ENCODE measurements at regions of chr10 and their contacts with region 1.

Region 1: GRCh38 chr10:69318106-69318866 is 40.0 kb downstream of the HK1 start:
- DNase-seq: peak; percentile 98
- H3K4me3 Mint-ChIP-seq: peak overlapping the region; percentile 98
- H3K27ac Mint-ChIP-seq: peak overlapping the region; percentile 98
- H3K4me1 Mint-ChIP-seq: peaks cover 30% of the 10 kb centered on the region
- H3K27me3 Mint-ChIP-seq: no peaks in the 10 kb centered on the region

Region 2: DNA sequence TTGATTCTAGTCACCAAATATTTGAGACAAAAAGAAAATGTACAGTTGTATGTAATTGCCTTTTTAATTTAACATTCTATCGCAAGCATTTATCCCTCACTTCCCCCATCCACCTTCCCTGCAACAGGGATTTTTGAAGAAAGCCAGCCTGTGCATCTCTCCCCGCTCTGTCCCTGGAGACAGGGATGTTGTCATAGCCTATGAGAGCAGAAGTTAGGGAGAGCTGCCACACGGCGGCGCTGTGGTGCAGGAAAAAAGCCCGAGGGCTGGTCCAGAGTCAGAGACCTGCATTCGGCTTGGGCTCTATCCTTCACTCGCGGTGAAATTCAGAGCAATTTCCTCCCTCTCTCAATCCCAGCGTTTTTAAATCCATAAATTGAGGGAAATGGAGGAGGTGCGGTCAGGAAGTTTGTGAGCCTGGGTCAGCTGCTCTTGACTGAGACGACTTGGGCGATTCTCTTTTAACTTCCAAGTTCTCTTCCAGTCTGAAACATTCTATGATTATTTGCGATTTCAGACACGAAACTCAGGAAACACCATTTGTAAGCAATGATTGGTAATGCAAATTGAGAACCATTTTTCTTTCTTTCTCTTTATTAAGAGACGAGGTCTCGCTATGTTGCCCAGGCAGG is 80.6 kb before region 1 on chr10:
- intact Hi-C with region 1: loop called (anchors 1 kb)
- DNase-seq: peak; percentile 96
- H3K4me3 Mint-ChIP-seq: no peak overlapping the region
- H3K27ac Mint-ChIP-seq: no peak overlapping the region
- H3K4me1 Mint-ChIP-seq: peaks cover 20% of the 10 kb centered on the region
- H3K27me3 Mint-ChIP-seq: no peaks in the 10 kb centered on the region

Region 3: GRCh38 chr10:69335063-69335587 is 16.8 kb after region 1 on chr10:
- intact Hi-C with region 1: loop called (anchors 2 kb)
- DNase-seq: peak; percentile 75
- H3K4me3 Mint-ChIP-seq: peak overlapping the region; percentile 78
- H3K27ac Mint-ChIP-seq: peak overlapping the region; percentile 91
- H3K4me1 Mint-ChIP-seq: peaks cover 46% of the 10 kb centered on the region
- H3K27me3 Mint-ChIP-seq: no peaks in the 10 kb centered on the region

Region 4: GRCh38 chr10:69359594-69359993 is 41.3 kb after region 1 on chr10:
- intact Hi-C with region 1: loop called (anchors 2 kb)
- DNase-seq: peak; percentile 75
- H3K4me3 Mint-ChIP-seq: peak overlapping the region; percentile 25
- H3K27ac Mint-ChIP-seq: peak overlapping the region; percentile 70
- H3K4me1 Mint-ChIP-seq: peaks cover 44% of the 10 kb centered on the region
- H3K27me3 Mint-ChIP-seq: no peaks in the 10 kb centered on the region

Region 5: DNA sequence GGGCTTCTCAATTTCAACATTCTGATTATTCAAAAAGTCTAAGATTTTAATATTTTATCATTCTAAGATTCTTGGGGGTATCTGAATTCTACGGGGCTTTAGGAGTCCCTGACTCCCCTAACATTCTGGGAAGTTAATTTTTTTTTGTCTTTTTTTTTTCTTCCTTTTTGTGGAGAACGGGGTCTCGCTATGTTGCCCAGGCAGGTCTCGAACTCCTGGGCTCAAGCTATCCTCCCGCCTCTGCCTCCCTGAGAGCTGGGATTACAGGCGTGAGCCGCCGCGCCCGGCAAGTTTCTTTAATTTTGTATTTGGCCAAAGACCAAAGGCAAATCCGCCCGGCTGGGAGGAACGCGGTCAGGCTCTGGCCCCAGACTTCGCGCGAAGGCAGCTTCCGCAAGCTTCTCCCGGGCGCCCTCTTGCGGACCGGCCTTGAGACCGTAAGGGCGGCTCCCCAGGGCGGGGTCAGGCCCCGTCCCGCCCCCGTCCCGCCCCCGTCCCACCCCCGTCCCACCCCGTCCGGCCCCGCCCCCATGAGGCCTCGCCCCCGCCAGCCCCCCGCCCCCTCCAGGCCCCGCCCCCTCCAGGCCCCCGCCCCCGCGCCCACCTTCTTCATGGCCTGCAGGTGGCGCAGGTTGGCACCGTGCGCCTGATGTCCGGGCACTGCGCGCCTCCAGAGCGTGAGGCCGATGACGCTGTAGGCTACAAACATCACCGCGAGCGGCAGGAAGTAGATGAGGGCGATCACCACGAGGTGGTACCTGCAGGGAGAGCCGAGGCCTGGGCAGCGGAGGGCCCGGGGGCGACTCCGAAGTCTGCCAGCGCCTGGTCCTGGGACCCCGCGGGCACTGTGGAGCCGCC is 90.3 kb after region 1 on chr10:
- intact Hi-C with region 1: loop called (anchors 1 kb)
- DNase-seq: peak; percentile 96
- H3K4me3 Mint-ChIP-seq: peak overlapping the region; percentile 80
- H3K27ac Mint-ChIP-seq: peak overlapping the region; percentile 90
- H3K4me1 Mint-ChIP-seq: peaks cover 20% of the 10 kb centered on the region
- H3K27me3 Mint-ChIP-seq: no peaks in the 10 kb centered on the region

Measured in activated CD4-positive, alpha-beta T cell treated with anti-CD3 and anti-CD28 coated beads, Interleukin-2, amount 10 ng/mL, durations not matched to agents 24 days and 14 days (primary cell).